CD4-positive, alpha-beta T cell (primary cell): ENCODE measurements at regions of chr12 and their contacts with region 1.

Region 1: DNA sequence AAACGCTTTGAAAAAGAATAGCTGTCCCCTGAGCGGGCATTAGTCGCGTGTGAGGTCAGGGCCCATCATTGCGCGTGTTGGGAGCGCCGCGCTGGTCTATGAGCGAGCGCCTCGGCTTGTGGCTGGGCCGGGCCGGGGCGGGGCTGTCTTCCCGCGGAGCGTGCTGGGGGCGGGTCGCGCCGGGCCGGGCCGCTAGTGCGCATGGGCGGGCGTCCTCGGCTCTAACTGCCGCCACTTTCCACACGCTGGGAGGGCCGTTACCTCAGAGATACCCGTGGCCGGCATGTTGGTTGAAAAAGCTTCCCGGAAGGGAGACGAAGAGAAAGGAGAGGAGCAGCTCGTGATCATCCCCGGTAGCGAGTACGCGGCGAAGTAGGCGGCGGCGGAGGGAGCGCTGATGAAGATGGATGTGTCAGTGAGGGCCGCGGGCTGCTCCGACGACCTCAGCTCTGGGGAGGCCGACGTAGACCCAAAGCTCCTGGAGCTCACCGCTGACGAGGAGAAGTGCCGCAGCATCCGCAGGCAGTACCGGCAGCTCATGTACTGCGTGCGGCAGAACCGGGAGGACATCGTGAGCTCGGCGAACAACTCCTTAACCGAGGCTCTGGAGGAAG is at the start of gene EID3:
- DNase-seq: peak; percentile 81 to 94 (median 90)
- ATAC-seq: peak; percentile 93
- H3K4me3 ChIP-seq: peak within 1 kb of the TSS; percentile 73
- H3K4me3 Mint-ChIP-seq: peak within 1 kb of the TSS; percentile 92
- H3K27ac ChIP-seq: peak within 1 kb of the TSS; percentile 75 to 84
- H3K27ac Mint-ChIP-seq: peak within 1 kb of the TSS; percentile 99
- H3K4me1 ChIP-seq: peaks cover 23% of the 10 kb centered on the region
- H3K4me1 Mint-ChIP-seq: peaks cover 68% of the 10 kb centered on the region
- H3K27me3 ChIP-seq: no peaks in the 10 kb centered on the region
- H3K27me3 Mint-ChIP-seq: no peaks in the 10 kb centered on the region
- CTCF ChIP-seq: no peak
- total RNA-seq, gene EID3: 13.5 to 14.3 TPM

Region 2: DNA sequence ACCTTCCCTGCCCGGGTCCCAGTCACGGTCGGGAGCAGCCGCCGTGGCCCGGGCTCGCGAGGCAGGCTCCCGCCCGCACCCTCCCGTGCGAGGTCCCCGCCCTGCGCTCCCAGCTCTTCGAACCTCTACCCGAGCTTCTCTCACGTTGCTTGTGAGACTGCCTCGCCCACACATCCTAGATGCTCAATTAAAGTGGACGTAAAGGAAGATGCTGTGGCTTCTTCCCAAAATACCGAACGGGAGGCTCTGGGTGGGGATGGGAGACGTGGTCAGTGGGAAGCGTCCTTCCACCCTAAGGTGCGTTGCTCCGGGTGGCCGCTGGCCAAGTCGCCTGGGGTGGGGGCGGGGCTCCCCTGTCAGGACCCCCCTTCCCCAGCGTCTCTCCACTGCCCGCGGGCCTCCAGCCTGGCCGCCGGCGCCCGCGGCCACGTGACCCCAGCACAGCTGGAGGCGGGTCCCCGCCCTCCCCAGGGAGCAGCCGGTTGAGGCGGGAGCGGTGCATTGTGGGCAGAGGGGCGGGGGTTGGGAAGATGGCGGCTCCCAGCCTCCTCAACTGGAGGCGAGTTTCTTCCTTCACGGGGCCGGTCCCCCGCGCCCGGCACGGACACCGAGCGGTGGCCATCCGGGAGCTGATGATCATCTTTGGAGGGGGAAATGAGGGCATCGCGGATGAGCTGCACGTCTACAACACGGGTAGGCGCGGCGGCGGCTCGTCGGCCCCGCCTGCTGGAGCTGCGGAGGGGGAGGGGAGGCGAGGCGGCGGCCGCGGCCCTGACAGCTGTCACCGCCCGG is 239.4 kb before region 1 on chr12 and contains the start of gene HCFC2:
- CTCF ChIA-PET with region 1: no interaction called
- POLR2A ChIA-PET with region 1: no interaction called
- intact Hi-C with region 1: loop called in 1 of 2 experiments (anchors 10 kb)
- DNase-seq: peak; percentile 74 to 93 (median 85)
- ATAC-seq: peak; percentile 92
- H3K4me3 ChIP-seq: peak within 1 kb of the TSS; percentile 85
- H3K4me3 Mint-ChIP-seq: peak within 1 kb of the TSS; percentile 95
- H3K27ac ChIP-seq: peak within 1 kb of the TSS; percentile 42 to 59
- H3K27ac Mint-ChIP-seq: peak within 1 kb of the TSS; percentile 82
- H3K4me1 ChIP-seq: peaks cover 17% of the 10 kb centered on the region
- H3K4me1 Mint-ChIP-seq: peaks cover 33% of the 10 kb centered on the region
- H3K27me3 ChIP-seq: peaks cover 0 to 2% of the 10 kb centered on the region in 2 experiments
- H3K27me3 Mint-ChIP-seq: peaks cover 10% of the 10 kb centered on the region
- CTCF ChIP-seq: no peak
- total RNA-seq, gene HCFC2: 11.2 to 15.1 TPM